HepG2 (cell line): ENCODE measurements at regions of chr5 and their contacts with region 1.

Region 1: DNA sequence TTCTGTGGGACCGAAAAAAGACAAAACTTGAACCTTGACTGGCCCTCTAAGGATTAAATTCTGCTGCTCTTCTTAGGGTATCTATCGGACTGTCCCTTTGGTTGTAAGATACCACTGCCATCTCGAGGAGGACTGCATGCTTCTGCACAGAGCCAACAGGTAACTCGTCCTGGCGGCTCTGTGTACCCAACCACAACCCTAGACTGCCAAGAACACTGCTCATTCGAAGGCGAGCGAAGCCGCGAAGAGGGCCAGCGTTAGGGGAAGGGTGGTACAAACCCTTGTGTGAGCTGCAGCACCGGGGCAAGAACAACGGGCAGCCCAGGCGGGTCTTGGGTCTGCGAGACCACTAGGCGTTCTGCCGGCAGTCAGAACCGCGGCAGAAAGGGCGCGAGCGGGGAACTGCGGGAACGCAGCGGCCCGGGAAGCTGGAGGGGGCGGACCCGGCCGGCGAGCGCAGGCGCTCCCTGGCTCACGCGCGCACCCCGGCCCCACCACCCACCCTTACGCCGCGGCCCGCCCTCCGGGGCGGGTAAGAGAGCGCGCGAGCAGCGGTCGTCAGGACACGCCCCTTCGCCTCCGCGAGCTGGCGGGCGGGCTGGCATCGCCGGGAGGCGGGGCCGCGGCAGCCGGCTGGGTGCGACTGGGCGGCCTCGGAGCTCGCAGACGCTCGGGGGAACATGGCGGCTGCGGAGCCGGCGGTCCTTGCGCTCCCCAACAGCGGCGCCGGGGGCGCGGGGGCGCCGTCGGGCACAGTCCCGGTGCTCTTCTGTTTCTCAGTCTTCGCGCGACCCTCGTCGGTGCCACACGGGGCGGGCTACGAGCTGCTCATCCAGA is at the start of gene ISOC1:
- DNase-seq: peak; percentile 73
- ATAC-seq: peak; percentile 89
- H3K4me3 ChIP-seq: peak within 1 kb of the TSS; percentile 80 to 99 (median 94)
- H3K27ac ChIP-seq: peak within 1 kb of the TSS; percentile 100
- H3K4me1 ChIP-seq: peaks cover 51% of the 10 kb centered on the region
- H3K27me3 ChIP-seq: no peaks in the 10 kb centered on the region
- CTCF ChIP-seq: peak; percentile 53
- EP300 ChIP-seq: no peak
- POLR2A ChIP-seq: peak; percentile 75 to 89
- RAD21 ChIP-seq: peak; percentile 20; the same call in 1 of the 2 replicates
- total RNA-seq, gene ISOC1: 51.3 and 65.0 TPM in 2 replicates

Region 2: GRCh38 chr5:127517480-127518318 is 1576.6 kb before region 1 on chr5 and contains the start of gene PRRC1:
- CTCF ChIA-PET with region 1: no interaction called
- POLR2A ChIA-PET with region 1: interaction called, 3 read pairs
- in situ Hi-C with region 1: no loop called
- intact Hi-C with region 1: loop called (anchors 10 kb)
- DNase-seq: peak; percentile 64
- ATAC-seq: peak; percentile 92
- H3K4me3 ChIP-seq: peak within 1 kb of the TSS; percentile 90 to 99 (median 98)
- H3K27ac ChIP-seq: peak within 1 kb of the TSS; percentile 96
- H3K4me1 ChIP-seq: peaks cover 52% of the 10 kb centered on the region
- H3K27me3 ChIP-seq: no peaks in the 10 kb centered on the region; a peak in 1 of 5 replicates
- CTCF ChIP-seq: no peak
- EP300 ChIP-seq: no peak
- POLR2A ChIP-seq: peak; percentile 88 to 97
- RAD21 ChIP-seq: no peak
- total RNA-seq, gene PRRC1: 51.9 and 86.7 TPM in 2 replicates

Region 3: GRCh38 chr5:127564002-127564769 is 1530.1 kb before region 1 on chr5:
- CTCF ChIA-PET with region 1: no interaction called
- POLR2A ChIA-PET with region 1: no interaction called
- in situ Hi-C with region 1: loop called (anchors 25 kb)
- intact Hi-C with region 1: no loop called
- DNase-seq: peak; percentile 57
- ATAC-seq: peak; percentile 85
- H3K4me3 ChIP-seq: no peak overlapping the region
- H3K27ac ChIP-seq: no peak overlapping the region
- H3K4me1 ChIP-seq: no peaks in the 10 kb centered on the region
- H3K27me3 ChIP-seq: peaks cover 0 to 3% of the 10 kb centered on the region in 2 experiments; a peak in 2 of 5 replicates
- CTCF ChIP-seq: peak; percentile 80
- EP300 ChIP-seq: no peak
- POLR2A ChIP-seq: no peak
- RAD21 ChIP-seq: 0 out of 2 replicates have a peak, but pooled peaks have one; percentile 23

Region 4: DNA sequence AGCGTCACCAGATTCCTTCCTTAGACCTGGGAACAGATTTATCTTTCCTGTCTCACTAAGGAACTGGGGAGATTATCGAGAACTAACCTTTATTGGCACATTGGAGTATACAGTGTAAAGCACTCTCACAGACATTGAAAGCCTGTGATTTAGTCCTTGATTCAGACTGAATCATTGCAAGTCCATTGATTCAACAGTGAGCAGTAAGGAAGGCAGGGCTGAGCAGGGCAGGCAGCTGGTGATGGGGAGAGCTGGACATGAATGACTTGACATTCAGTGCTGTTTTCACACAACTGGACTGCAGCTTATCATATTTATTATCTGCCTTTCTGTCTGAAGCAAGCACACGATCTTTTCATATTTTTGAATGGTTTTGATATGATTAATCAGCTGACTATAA is 16.4 kb after region 1 on chr5:
- CTCF ChIA-PET with region 1: no interaction called
- POLR2A ChIA-PET with region 1: no interaction called
- in situ Hi-C with region 1: no loop called
- intact Hi-C with region 1: no loop called
- DNase-seq: no peak
- ATAC-seq: no peak; the same call in 2 of the 3 replicates
- H3K4me3 ChIP-seq: no peak overlapping the region
- H3K27ac ChIP-seq: no peak overlapping the region
- H3K4me1 ChIP-seq: no peaks in the 10 kb centered on the region
- H3K27me3 ChIP-seq: no peaks in the 10 kb centered on the region
- CTCF ChIP-seq: no peak
- EP300 ChIP-seq: no peak
- POLR2A ChIP-seq: no peak
- RAD21 ChIP-seq: no peak

Region 5: DNA sequence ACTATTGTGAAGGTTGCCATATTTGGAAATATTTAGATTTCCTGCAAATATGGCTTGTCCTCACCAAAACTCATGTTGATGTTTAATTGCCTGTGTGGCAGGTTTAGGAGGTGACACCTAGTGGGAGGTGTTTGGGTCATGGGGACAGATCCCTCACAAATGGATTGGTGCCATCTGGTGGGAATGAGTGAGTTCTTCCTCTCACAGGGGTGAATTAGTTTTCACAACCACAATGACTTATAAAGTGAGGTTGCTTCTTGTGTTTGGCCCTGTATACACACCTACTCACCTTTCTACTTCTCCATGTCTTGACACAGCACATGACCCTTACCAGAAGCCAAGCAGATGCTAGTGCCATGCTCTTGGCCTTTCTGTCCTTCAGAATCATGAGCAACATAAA is 41.3 kb after region 1 on chr5:
- CTCF ChIA-PET with region 1: no interaction called
- POLR2A ChIA-PET with region 1: no interaction called
- in situ Hi-C with region 1: no loop called
- intact Hi-C with region 1: loop called (anchors 1 kb)
- DNase-seq: peak; percentile 21
- ATAC-seq: peak; percentile 87
- H3K4me3 ChIP-seq: no peak overlapping the region
- H3K27ac ChIP-seq: no peak overlapping the region
- H3K4me1 ChIP-seq: no peaks in the 10 kb centered on the region
- H3K27me3 ChIP-seq: no peaks in the 10 kb centered on the region
- CTCF ChIP-seq: peak; percentile 53
- EP300 ChIP-seq: no peak
- POLR2A ChIP-seq: no peak
- RAD21 ChIP-seq: 0 out of 2 replicates have a peak, but pooled peaks have one; percentile 9